SK-N-SH (cell line): ENCODE measurements at regions of chr9 and their contacts with region 1.

Region 1: DNA sequence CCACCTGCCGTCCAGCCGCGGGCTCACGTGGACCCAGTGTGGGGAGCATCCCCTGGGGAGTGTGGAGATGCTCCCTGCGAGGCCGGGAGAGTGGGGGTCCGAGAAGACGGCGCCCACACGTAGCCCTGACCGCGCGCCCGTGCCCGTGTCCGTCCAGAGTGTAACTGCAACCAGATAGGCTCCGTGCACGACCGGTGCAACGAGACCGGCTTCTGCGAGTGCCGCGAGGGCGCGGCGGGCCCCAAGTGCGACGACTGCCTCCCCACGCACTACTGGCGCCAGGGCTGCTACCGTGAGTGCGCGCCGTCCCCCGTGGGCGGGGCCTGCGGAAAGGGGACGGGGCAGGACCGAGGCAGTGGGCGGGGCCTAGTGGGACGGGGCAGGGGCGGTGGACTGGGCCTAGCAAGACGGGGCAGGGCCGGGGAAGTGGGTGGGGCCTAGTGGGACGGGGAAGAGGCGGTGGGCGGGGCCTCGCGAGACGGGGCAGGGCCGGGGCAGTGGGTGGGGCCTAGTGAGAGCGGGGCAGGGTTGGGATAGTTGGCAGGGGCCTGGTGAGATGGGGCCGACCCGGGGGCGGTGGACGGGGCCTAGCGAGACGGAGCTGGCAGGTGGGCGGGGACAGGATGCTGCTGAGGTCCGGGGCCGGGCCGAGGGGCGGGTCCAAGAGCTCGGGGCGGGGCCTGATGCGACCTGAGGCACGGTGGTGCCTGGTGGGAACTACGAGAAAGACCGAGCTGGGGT is 79.1 kb downstream of the NTNG2 start:
- DNase-seq: peak; percentile 99
- H3K4me3 ChIP-seq: peak overlapping the region; percentile 55 to 64
- H3K27ac ChIP-seq: peak overlapping the region in 1 of 2 experiments; percentile 65; a peak in 2 of 4 replicates
- H3K4me1 ChIP-seq: peaks cover 0 to 28% of the 10 kb centered on the region in 2 experiments; a peak in 1 of 4 replicates
- H3K27me3 ChIP-seq: no peaks in the 10 kb centered on the region
- CTCF ChIP-seq: no peak
- EP300 ChIP-seq: no peak
- RAD21 ChIP-seq: no peak

Region 2: GRCh38 chr9:131839281-131840084 is 401.4 kb before region 1 on chr9:
- CTCF ChIA-PET with region 1: interaction called, 17 read pairs
- POLR2A ChIA-PET with region 1: no interaction called
- DNase-seq: no peak
- H3K4me3 ChIP-seq: no peak overlapping the region
- H3K27ac ChIP-seq: no peak overlapping the region
- H3K4me1 ChIP-seq: no peaks in the 10 kb centered on the region; a peak in 1 of 4 replicates
- H3K27me3 ChIP-seq: no peaks in the 10 kb centered on the region
- CTCF ChIP-seq: no peak
- EP300 ChIP-seq: no peak
- RAD21 ChIP-seq: no peak

Region 3: GRCh38 chr9:132042324-132042723 is 198.6 kb before region 1 on chr9:
- CTCF ChIA-PET with region 1: interaction called, 13 read pairs
- POLR2A ChIA-PET with region 1: no interaction called
- DNase-seq: no peak
- H3K4me3 ChIP-seq: no peak overlapping the region
- H3K27ac ChIP-seq: peak overlapping the region; percentile 55 to 95; a peak in 3 of 4 replicates
- H3K4me1 ChIP-seq: peaks cover 34 to 40% of the 10 kb centered on the region in 2 experiments
- H3K27me3 ChIP-seq: no peaks in the 10 kb centered on the region
- CTCF ChIP-seq: no peak; the same call in 1 of the 2 replicates
- EP300 ChIP-seq: peak; percentile 31 to 94; a peak in 3 of 4 replicates
- RAD21 ChIP-seq: no peak

Region 4: GRCh38 chr9:132192728-132193127 is 48.2 kb before region 1 on chr9:
- CTCF ChIA-PET with region 1: interaction called, 16 read pairs
- POLR2A ChIA-PET with region 1: no interaction called
- DNase-seq: no peak
- H3K4me3 ChIP-seq: no peak overlapping the region
- H3K27ac ChIP-seq: no peak overlapping the region
- H3K4me1 ChIP-seq: peaks cover 0 to 7% of the 10 kb centered on the region in 2 experiments; a peak in 1 of 4 replicates
- H3K27me3 ChIP-seq: no peaks in the 10 kb centered on the region
- CTCF ChIP-seq: no peak
- EP300 ChIP-seq: no peak
- RAD21 ChIP-seq: no peak

Region 5: GRCh38 chr9:132260846-132261245 is 19.9 kb after region 1 on chr9:
- CTCF ChIA-PET with region 1: interaction called, 31 read pairs
- POLR2A ChIA-PET with region 1: interaction called, 3 read pairs
- DNase-seq: no peak
- H3K4me3 ChIP-seq: no peak overlapping the region
- H3K27ac ChIP-seq: no peak overlapping the region
- H3K4me1 ChIP-seq: no peaks in the 10 kb centered on the region; a peak in 1 of 4 replicates
- H3K27me3 ChIP-seq: no peaks in the 10 kb centered on the region
- CTCF ChIP-seq: no peak
- EP300 ChIP-seq: no peak
- RAD21 ChIP-seq: no peak